K562 (cell line): ENCODE measurements at regions of chr12 and their contacts with region 1.

Region 1: GRCh38 chr12:38906482-38907170 is 1.2 kb upstream of the CPNE8 start:
- DNase-seq: peak; percentile 54 to 83 (median 67)
- ATAC-seq: peak; percentile 89
- H3K4me3 ChIP-seq: peak overlapping the region; percentile 58
- H3K27ac ChIP-seq: peak overlapping the region; percentile 70; the same call in 1 of the 3 replicates
- H3K4me1 ChIP-seq: peaks cover 0 to 17% of the 10 kb centered on the region in 2 experiments; a peak in 3 of 5 replicates
- H3K27me3 ChIP-seq: no peaks in the 10 kb centered on the region
- CTCF ChIP-seq: peak; percentile 61 to 77 (median 77)
- EP300 ChIP-seq: no peak
- POLR2A ChIP-seq: no peak
- RAD21 ChIP-seq: peak; percentile 60 to 68

Region 2: GRCh38 chr12:38324896-38325295 is 581.7 kb before region 1 on chr12:
- CTCF ChIA-PET with region 1: no interaction called
- POLR2A ChIA-PET with region 1: no interaction called
- in situ Hi-C with region 1: no loop called
- intact Hi-C with region 1: loop called (anchors 10 kb)
- DNase-seq: no peak
- ATAC-seq: no peak
- H3K4me3 ChIP-seq: no peak overlapping the region
- H3K27ac ChIP-seq: no peak overlapping the region
- H3K4me1 ChIP-seq: no peaks in the 10 kb centered on the region
- H3K27me3 ChIP-seq: no peaks in the 10 kb centered on the region
- CTCF ChIP-seq: no peak
- EP300 ChIP-seq: no peak
- POLR2A ChIP-seq: no peak
- RAD21 ChIP-seq: no peak

Region 3: DNA sequence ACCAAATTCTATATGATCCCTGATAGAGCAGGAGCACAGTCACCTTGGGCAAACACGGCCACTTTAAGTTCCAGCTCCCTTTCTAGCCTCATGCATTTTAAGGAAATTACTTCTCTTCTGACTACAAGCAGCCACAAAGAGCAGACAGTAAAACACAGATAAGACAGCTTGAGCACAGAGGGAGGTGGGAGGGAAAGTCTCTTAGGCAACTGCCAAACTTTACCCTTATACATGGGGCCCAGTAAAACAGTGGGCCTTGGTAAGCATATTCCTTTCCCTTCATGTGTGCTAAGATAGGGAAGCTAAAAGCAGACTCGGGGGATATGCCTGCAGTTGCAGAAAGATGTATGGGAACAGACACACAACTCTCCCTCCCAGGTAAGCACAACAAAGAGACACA is 237.1 kb before region 1 on chr12:
- CTCF ChIA-PET with region 1: no interaction called
- POLR2A ChIA-PET with region 1: interaction called, 3 read pairs
- in situ Hi-C with region 1: no loop called
- intact Hi-C with region 1: loop called (anchors 2 kb)
- DNase-seq: peak in 2 of 4 experiments; percentile 9 to 68
- ATAC-seq: peak; percentile 84
- H3K4me3 ChIP-seq: no peak overlapping the region
- H3K27ac ChIP-seq: peak overlapping the region; percentile 71
- H3K4me1 ChIP-seq: no peaks in the 10 kb centered on the region
- H3K27me3 ChIP-seq: no peaks in the 10 kb centered on the region
- CTCF ChIP-seq: no peak
- EP300 ChIP-seq: 0 out of 2 replicates have a peak, but pooled peaks have one; percentile 4
- POLR2A ChIP-seq: no peak
- RAD21 ChIP-seq: no peak

Region 4: DNA sequence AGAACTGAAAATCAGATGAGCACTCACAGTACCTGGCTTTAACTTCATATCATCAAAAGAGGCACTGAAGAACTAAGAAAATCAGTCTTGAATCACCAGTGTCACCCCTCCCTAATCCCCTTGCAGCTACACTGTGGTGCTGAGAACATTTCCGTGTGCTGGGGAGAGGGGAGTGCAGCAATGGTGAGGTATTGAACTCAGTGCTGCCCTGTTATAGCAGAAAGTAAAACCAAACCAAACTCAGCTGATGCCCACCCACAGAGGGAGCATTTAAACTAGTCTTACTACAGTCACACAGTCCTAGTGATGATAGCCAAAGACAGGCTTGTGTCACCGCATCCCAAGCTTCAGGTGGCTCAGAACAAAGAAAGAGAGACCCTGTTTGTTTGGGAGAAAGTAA is 123.3 kb before region 1 on chr12:
- CTCF ChIA-PET with region 1: no interaction called
- POLR2A ChIA-PET with region 1: no interaction called
- in situ Hi-C with region 1: no loop called
- intact Hi-C with region 1: no loop called
- DNase-seq: no peak
- ATAC-seq: no peak
- H3K4me3 ChIP-seq: no peak overlapping the region
- H3K27ac ChIP-seq: no peak overlapping the region; the same call in 2 of the 3 replicates
- H3K4me1 ChIP-seq: no peaks in the 10 kb centered on the region
- H3K27me3 ChIP-seq: no peaks in the 10 kb centered on the region
- CTCF ChIP-seq: no peak
- EP300 ChIP-seq: no peak
- POLR2A ChIP-seq: no peak
- RAD21 ChIP-seq: no peak

Region 5: DNA sequence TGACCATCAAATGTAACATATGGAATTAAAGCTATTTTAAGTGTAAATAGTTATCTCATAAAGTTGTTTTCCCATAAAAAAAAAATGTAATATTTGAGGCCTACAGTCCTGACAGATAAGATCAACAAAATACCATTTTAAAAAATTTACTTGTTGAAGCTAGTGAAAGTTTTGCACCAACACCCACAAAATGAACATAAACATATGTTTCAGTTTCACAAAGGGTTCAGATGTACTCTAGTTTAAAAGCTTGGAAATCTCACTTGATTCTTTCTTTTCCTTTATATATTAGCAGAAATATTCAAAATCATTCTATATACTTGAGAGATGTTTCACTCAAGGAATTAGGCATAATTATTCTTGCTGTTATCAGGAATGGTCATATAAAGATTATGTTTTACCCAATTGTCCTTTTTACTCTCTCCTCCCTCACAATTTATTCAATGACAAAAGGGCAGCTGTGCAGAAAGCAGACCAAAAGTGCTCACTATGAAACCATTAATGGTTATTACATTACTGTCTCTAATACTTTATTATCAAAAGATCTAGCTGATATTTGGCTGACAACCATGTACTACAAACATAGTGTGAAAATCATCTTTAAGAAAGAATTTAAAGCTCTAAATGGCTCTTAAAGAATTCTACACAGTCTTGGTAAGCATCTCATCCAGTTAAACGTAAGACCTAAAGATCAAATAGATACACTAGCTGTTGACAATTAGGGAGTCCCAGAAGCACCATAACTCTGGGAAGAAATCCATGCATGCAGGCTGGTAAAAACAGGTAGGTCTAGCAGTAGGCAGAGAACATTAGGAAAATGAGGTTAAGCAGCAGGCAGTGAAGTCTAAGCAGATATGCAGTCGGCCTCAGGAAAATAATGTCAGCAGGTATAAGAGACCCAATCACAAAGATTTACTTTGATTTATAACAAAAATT is 507.5 kb after region 1 on chr12:
- CTCF ChIA-PET with region 1: no interaction called
- POLR2A ChIA-PET with region 1: no interaction called
- in situ Hi-C with region 1: no loop called
- intact Hi-C with region 1: no loop called
- DNase-seq: no peak
- ATAC-seq: no peak; the same call in 2 of the 3 replicates
- H3K4me3 ChIP-seq: no peak overlapping the region
- H3K27ac ChIP-seq: no peak overlapping the region
- H3K4me1 ChIP-seq: peaks cover 0 to 3% of the 10 kb centered on the region in 2 experiments; a peak in 1 of 5 replicates
- H3K27me3 ChIP-seq: no peaks in the 10 kb centered on the region
- CTCF ChIP-seq: no peak
- EP300 ChIP-seq: no peak
- POLR2A ChIP-seq: no peak
- RAD21 ChIP-seq: no peak